ENCODE measurements at regions of chr5 and their contacts with region 1.

Region 1: GRCh38 chr5:148374692-148375360 is 8.9 kb upstream of the FBXO38 start:
- DNase-seq: no peak
- H3K4me3 Mint-ChIP-seq: no peak overlapping the region
- H3K27ac Mint-ChIP-seq: no peak overlapping the region
- H3K4me1 Mint-ChIP-seq: peaks cover 7% of the 10 kb centered on the region
- H3K27me3 Mint-ChIP-seq: no peaks in the 10 kb centered on the region

Region 2: DNA sequence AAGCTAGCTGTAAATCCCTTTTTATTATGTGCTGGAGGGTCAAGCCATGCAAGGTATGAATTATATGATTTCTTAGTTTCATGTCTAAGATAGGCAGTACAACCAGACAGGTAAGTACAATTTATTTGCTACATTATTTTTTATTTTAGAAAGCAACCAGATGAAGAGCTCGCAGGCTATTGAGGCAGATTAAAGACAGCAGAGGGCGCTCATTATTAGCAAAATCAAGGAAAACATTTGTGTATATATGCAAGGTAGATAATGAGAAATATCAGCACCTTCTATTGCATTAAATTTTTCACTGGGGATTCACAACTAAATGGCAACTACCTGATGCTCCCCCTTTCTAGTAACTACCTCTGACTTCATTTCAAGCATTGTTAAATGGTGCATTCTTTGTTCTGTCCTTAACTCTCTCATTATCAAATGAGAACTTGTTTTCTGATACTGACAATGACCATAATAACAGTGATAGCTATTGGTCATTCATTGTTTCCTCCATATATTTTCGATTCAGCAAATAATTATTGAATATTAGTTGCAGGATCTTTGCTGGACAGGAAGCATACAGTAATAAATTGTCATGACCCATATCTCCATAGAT is 487.7 kb before region 1 on chr5:
- intact Hi-C with region 1: loop called (anchors 10 kb)
- DNase-seq: no peak
- H3K4me3 Mint-ChIP-seq: no peak overlapping the region
- H3K27ac Mint-ChIP-seq: no peak overlapping the region
- H3K4me1 Mint-ChIP-seq: no peaks in the 10 kb centered on the region
- H3K27me3 Mint-ChIP-seq: peaks cover 11% of the 10 kb centered on the region

Region 3: DNA sequence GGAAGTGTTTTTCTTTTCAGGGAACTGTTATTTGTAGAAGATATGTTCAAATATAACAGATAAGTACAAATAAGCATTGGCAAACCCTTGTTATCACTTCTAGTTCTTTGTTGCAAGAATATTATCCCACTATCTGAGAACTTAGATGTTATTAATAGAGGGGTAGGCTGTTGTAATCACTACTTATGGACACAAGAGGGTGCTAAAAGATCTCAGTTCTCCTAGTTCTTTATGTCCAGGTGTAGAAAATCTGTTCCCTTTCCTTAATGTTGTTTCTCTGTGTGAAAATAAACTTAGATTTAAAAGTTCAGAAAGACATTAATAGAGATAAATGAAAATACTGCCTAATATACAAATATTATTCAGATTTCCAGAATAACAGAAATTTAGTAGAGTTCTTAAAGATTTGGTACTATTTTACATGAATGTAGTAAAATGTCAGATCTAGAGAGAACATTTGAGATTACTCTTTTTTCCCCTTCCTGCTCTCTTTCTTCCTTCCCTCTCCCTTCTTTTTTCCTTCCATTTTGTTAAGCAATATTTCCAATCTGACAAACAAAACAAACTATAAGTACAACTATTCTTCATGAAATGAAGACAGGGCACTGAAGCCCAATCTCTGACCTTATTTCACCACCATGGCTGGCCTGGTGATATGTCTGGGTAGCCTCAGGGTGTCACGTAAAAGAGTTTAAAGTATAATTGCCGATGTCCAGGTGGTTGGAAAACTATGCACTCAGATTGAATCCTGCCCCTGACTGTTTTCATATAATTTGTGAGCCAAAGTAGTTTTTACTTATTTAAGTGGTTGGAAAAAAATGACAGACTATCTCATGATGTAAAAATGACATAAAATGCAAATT is 424.9 kb before region 1 on chr5:
- intact Hi-C with region 1: loop called (anchors 2 kb)
- DNase-seq: no peak
- H3K4me3 Mint-ChIP-seq: no peak overlapping the region
- H3K27ac Mint-ChIP-seq: no peak overlapping the region
- H3K4me1 Mint-ChIP-seq: no peaks in the 10 kb centered on the region
- H3K27me3 Mint-ChIP-seq: no peaks in the 10 kb centered on the region

Region 4: DNA sequence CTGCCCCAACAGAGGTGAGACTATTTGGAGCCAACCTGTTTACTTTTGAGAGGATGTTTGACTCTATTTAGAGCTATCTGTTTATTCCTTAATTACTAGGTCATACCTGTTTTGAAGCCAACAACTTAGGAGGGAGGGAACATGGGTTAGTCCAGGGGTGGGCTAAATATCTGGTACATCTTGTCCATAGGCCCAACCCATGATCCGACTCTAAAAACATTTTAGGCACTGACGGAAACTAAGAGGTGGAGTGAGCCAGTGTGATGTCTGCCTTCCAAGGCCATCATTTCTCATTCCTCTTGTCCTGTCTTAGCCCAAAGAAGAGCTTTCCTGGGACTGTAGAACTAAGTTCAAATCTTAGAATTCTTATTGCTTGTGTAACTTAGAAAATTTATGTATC is 302.6 kb before region 1 on chr5:
- intact Hi-C with region 1: no loop called
- DNase-seq: no peak
- H3K4me3 Mint-ChIP-seq: no peak overlapping the region
- H3K27ac Mint-ChIP-seq: no peak overlapping the region
- H3K4me1 Mint-ChIP-seq: no peaks in the 10 kb centered on the region
- H3K27me3 Mint-ChIP-seq: no peaks in the 10 kb centered on the region

Region 5: DNA sequence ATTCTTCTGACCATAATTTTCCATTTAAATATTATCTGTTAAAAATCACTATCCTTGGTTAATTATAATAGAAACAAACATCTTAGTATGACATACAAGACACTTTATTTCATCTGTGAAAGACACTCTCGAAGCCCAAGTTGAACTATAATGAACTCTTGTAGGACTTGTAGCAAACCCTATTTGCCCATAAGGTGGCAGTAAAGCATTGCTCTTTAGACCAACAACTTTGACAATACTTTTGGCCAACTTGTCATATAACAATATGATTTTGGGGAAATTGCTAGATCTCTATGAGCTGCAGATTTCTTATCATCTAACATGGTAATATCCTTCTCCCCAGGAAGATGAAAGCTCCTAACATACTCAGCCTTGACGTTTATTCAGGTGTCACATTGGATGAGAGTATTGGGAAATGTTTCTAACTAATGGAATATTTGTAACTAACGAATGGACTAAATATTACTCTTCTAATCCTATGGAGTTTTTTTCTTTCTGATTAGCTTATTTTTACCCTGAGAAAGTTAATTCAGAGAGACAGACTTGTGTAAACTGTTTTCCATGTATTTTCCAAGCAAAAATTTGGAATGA is 195.5 kb before region 1 on chr5:
- intact Hi-C with region 1: loop called (anchors 1 kb)
- DNase-seq: no peak
- H3K4me3 Mint-ChIP-seq: no peak overlapping the region
- H3K27ac Mint-ChIP-seq: no peak overlapping the region
- H3K4me1 Mint-ChIP-seq: no peaks in the 10 kb centered on the region
- H3K27me3 Mint-ChIP-seq: peaks cover 7% of the 10 kb centered on the region

Region 6: GRCh38 chr5:148849461-148849860 is 474.6 kb after region 1 on chr5:
- intact Hi-C with region 1: no loop called
- DNase-seq: no peak
- H3K4me3 Mint-ChIP-seq: no peak overlapping the region
- H3K27ac Mint-ChIP-seq: peak overlapping the region; percentile 63
- H3K4me1 Mint-ChIP-seq: peaks cover 46% of the 10 kb centered on the region
- H3K27me3 Mint-ChIP-seq: peaks cover 8% of the 10 kb centered on the region

Measured in activated T-helper 1 cell treated with anti-CD3 and anti-CD28 coated beads, Interleukin-12 subunit alpha, Interleukin-12 subunit beta, Interleukin-2, Interleukin-4 antibody, amounts not matched to agents 30 ng/mL and 10 ng/mL and 1 ng/mL, durations not matched to agents 14 hours and 24 hours and 36 hours (primary cell).